ENCODE measurements at regions of chr20 and their contacts with region 1.

Region 1: DNA sequence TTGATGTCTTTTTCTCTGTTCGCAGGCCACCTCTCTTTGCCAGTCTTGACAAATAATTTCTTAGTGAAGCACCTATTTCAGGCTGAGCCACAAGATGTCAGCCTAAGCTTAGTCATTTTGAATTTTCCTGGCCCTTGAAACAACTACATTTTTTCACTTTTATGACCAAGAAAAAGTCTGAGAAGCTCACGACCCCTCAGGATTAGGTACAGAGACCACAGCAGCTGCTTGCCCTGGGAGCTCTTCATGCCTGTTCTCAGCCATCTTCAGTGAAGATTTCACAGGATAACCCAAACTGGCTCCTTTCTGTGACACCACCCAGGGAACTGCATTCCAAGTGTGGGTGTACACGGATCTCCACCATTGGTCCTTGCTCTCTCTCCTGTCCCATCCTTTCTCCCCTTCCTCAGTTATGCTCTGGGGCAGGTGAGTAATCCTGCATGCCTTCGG is 38.4 kb upstream of the SPTLC3 start:
- DNase-seq: peak in 3 of 14 experiments; percentile 11 to 36 (median 27)
- ATAC-seq: no peak
- H3K4me3 ChIP-seq: no peak overlapping the region
- H3K4me3 Mint-ChIP-seq: no peak overlapping the region
- H3K27ac ChIP-seq: no peak overlapping the region
- H3K27ac Mint-ChIP-seq: no peak overlapping the region
- H3K4me1 ChIP-seq: no peaks in the 10 kb centered on the region
- H3K4me1 Mint-ChIP-seq: peaks cover 7% of the 10 kb centered on the region
- H3K27me3 ChIP-seq: no peaks in the 10 kb centered on the region
- H3K27me3 Mint-ChIP-seq: no peaks in the 10 kb centered on the region
- CTCF ChIP-seq: peak; percentile 32

Region 2: GRCh38 chr20:13105864-13106457 is 135.6 kb after region 1 on chr20:
- CTCF ChIA-PET with region 1: no interaction called
- POLR2A ChIA-PET with region 1: no interaction called
- intact Hi-C with region 1: loop called (anchors 2 to 5 kb)
- DNase-seq: peak in 3 of 14 experiments; percentile 15 to 35 (median 24)
- ATAC-seq: no peak
- H3K4me3 ChIP-seq: no peak overlapping the region
- H3K4me3 Mint-ChIP-seq: no peak overlapping the region
- H3K27ac ChIP-seq: no peak overlapping the region
- H3K27ac Mint-ChIP-seq: no peak overlapping the region
- H3K4me1 ChIP-seq: no peaks in the 10 kb centered on the region
- H3K4me1 Mint-ChIP-seq: no peaks in the 10 kb centered on the region
- H3K27me3 ChIP-seq: no peaks in the 10 kb centered on the region
- H3K27me3 Mint-ChIP-seq: no peaks in the 10 kb centered on the region
- CTCF ChIP-seq: peak; percentile 70

Region 3: GRCh38 chr20:13302647-13303450 is 332.5 kb after region 1 on chr20:
- CTCF ChIA-PET with region 1: no interaction called
- POLR2A ChIA-PET with region 1: no interaction called
- intact Hi-C with region 1: loop called in 1 of 2 experiments (anchors 2 kb)
- DNase-seq: peak; percentile 6 to 58 (median 30)
- ATAC-seq: peak; percentile 60
- H3K4me3 ChIP-seq: no peak overlapping the region
- H3K4me3 Mint-ChIP-seq: no peak overlapping the region
- H3K27ac ChIP-seq: no peak overlapping the region
- H3K27ac Mint-ChIP-seq: no peak overlapping the region
- H3K4me1 ChIP-seq: no peaks in the 10 kb centered on the region
- H3K4me1 Mint-ChIP-seq: no peaks in the 10 kb centered on the region
- H3K27me3 ChIP-seq: no peaks in the 10 kb centered on the region
- H3K27me3 Mint-ChIP-seq: no peaks in the 10 kb centered on the region
- CTCF ChIP-seq: peak; percentile 71

Region 4: DNA sequence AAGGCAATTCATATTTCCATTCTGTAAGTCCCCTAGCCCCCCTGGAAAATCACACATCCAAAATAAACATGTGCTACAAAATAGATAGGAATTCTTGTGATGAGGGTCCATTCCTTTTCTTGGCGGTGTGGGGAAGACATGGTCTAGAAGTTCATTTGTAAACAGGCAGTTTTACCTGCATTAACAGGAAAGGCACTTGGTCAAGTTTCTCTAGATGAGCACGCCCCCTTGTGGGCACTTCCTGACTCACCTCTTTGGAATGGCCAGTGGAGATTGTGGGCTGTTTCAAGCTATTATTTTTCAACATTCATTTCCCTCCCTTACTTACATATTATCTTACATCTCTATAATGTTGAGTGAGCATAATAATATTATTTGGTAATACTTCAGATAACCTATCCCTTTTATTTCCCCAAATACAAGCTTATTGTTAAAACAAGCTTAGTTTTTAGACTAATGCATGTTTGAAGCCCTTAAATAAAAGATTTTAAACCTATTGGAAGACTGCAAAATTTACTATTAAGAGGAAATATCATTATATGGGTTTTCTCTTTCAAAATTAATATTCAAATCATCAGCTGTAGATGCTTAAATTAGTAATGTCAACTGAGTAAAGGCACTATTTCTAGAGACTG is 576.2 kb after region 1 on chr20:
- CTCF ChIA-PET with region 1: no interaction called
- POLR2A ChIA-PET with region 1: no interaction called
- intact Hi-C with region 1: loop called in 1 of 2 experiments (anchors 2 kb)
- DNase-seq: peak; percentile 36 to 73 (median 52)
- ATAC-seq: no peak
- H3K4me3 ChIP-seq: no peak overlapping the region
- H3K4me3 Mint-ChIP-seq: no peak overlapping the region
- H3K27ac ChIP-seq: no peak overlapping the region
- H3K27ac Mint-ChIP-seq: no peak overlapping the region
- H3K4me1 ChIP-seq: no peaks in the 10 kb centered on the region
- H3K4me1 Mint-ChIP-seq: no peaks in the 10 kb centered on the region
- H3K27me3 ChIP-seq: no peaks in the 10 kb centered on the region
- H3K27me3 Mint-ChIP-seq: no peaks in the 10 kb centered on the region
- CTCF ChIP-seq: peak; percentile 84